OCI-LY7 (cell line): ENCODE measurements at regions of chr1 and their contacts with region 1.

Region 1: GRCh38 chr1:43537423-43538159 is 6.9 kb downstream of the PTPRF start:
- DNase-seq: no peak
- H3K4me3 ChIP-seq: no peak overlapping the region
- H3K27ac ChIP-seq: no peak overlapping the region
- H3K4me1 ChIP-seq: no peaks in the 10 kb centered on the region
- CTCF ChIP-seq: no peak

Region 2: DNA sequence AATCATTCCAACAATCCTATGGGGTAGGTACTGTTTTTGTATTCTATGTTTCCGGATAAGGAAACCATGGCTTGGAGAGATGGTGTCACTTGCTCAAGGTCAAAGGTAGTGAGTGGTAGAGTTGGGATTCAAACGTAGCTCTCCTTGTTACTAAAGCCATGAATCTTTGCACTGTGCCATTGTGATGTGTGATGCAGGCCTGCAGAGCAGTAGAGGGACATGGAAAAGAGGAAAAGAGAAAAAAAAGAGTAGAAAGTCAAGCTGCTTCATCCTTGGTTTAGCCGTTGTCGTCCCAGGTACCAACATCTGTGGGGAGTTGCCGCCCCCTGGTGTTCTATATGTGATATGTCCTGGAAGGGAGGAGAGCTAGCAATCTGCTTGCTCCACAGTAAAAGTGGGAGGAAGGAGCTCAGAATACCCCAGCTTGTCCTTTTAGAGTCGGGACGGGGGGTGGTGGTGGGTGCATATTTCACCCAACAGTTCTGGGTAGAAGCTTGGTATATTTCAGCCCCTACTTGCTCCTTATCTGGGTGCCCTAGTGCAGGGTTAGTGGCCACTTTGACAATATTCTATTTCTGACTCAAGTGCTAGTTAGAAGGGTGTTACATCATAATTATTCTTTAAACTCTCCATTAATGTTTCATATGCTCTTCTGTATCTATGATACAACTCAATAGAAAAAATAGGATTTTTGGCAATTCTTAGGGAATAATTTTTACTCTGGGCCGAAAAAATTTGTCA is 463.9 kb before region 1 on chr1:
- CTCF ChIA-PET with region 1: no interaction called
- POLR2A ChIA-PET with region 1: no interaction called
- intact Hi-C with region 1: no loop called
- DNase-seq: peak; percentile 77
- H3K4me3 ChIP-seq: no peak overlapping the region
- H3K27ac ChIP-seq: no peak overlapping the region
- H3K4me1 ChIP-seq: peaks cover 16% of the 10 kb centered on the region
- CTCF ChIP-seq: peak; percentile 94

Region 3: GRCh38 chr1:43253173-43253572 is 284.4 kb before region 1 on chr1:
- CTCF ChIA-PET with region 1: no interaction called
- POLR2A ChIA-PET with region 1: no interaction called
- intact Hi-C with region 1: no loop called
- DNase-seq: no peak
- H3K4me3 ChIP-seq: no peak overlapping the region
- H3K27ac ChIP-seq: no peak overlapping the region
- H3K4me1 ChIP-seq: no peaks in the 10 kb centered on the region
- CTCF ChIP-seq: no peak

Region 4: DNA sequence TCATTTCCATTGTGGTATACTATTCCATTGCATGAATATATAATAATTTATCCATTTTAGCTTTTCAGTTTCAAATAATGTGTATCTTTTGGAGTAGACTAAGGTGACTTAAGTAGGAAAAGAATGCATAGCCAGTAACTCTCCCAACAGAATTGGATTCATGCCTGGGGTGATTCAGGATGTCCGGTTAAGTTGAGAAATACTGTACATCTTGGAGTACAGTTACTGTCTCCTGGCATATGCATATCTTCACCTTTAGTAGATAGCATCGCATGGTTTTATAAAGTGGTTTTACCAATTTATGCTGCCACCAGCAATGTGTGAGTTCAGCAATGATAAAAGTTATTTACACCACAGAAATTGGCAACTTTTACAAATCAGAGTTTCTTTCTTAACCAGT is 512.2 kb after region 1 on chr1:
- CTCF ChIA-PET with region 1: no interaction called
- POLR2A ChIA-PET with region 1: no interaction called
- intact Hi-C with region 1: loop called (anchors 5 kb)
- DNase-seq: no peak
- H3K4me3 ChIP-seq: no peak overlapping the region
- H3K27ac ChIP-seq: no peak overlapping the region
- H3K4me1 ChIP-seq: no peaks in the 10 kb centered on the region
- CTCF ChIP-seq: no peak